GM13976 (cell line): ENCODE measurements at regions of chr3 and their contacts with region 1.

Region 1: DNA sequence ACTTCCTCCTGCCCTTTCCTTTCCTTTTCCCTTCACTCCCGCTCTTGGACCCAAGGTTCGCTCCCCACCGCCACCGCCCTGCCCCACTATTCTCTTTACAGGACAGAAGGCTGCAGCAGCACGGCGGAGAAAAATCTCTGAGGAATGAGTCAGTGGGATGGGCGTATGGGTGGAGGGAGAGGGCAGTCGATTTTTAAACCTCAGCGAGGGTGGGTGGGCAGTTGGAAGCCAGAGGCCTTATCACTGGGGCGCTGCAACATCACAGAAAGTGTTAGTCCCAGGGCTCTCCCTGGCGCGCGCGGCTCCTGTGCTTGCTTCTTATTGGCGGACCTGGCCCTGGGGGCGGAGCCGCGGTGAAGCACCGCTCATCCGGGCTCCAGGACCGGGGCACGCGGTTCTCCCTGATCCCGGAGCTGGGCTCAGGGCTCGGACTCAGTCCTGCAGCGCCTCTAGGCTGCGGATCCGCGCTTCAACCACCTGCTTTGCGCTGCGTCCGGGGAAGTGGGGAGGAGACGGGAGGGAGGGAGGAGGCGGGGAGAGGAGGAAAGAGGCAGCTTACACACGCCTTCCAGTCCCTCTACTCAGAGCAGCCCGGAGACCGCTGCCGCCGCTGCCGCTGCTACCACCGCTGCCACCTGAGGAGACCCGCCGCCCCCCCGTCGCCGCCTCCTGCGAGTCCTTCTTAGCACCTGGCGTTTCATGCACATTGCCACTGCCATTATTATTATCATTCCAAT is at the start of gene ALCAM:
- DNase-seq: peak; percentile 82
- CTCF ChIP-seq: peak; percentile 77

Region 2: GRCh38 chr3:104291437-104291851 is 1075.0 kb before region 1 on chr3:
- in situ Hi-C with region 1: loop called (anchors 25 kb)
- DNase-seq: no peak
- CTCF ChIP-seq: no peak

Region 3: GRCh38 chr3:104604369-104605010 is 762.0 kb before region 1 on chr3:
- in situ Hi-C with region 1: loop called (anchors 25 kb)
- DNase-seq: no peak
- CTCF ChIP-seq: no peak